ENCODE measurements at regions of chr1 and their contacts with region 1.

Region 1: DNA sequence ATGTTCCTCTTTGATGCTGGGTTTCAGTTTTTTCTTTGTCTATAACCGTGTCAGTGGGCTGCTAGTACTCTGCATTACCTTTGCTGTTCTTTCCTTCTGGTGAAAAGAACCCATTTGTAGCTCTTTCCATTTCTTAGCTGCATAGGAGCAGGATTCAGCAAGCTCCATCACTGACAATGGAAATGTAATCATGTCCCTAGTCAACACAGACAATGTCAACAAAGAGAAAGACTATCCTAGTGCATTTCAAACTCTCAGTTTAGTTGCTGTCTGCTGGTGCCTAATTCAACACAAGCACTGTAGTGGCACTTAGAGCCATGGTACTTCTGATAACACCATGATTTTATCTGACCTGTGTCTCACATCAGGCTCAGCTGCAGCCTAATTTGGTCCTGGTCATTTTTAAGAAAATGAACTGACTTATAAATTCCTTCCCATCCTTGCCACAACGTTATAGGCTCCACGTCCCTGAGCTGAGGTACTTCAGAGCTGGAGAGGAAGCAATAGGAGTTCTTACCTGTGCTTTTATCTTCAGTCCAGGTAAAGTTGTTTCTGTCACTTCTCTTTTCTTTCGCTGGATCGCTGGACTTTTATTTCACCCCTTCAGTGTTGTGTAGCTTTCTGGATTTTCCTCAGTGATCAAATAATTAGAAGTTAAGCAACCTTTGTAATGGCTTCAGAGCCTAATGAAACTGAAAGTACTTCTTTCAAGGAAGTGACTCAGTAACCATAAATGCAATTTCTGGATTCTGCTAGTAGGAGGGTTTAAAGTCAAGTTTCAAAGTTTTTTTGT is at the start of gene GBP3:
- DNase-seq: peak; percentile 70
- ATAC-seq: peak; percentile 73
- H3K4me3 ChIP-seq: peak within 1 kb of the TSS; percentile 63
- H3K27ac ChIP-seq: peak within 1 kb of the TSS; percentile 68
- H3K4me1 ChIP-seq: peaks cover 24% of the 10 kb centered on the region
- H3K27me3 ChIP-seq: no peaks in the 10 kb centered on the region
- CTCF ChIP-seq: no peak
- total RNA-seq, gene GBP3: 23.3 and 24.9 TPM in 2 replicates

Region 2: DNA sequence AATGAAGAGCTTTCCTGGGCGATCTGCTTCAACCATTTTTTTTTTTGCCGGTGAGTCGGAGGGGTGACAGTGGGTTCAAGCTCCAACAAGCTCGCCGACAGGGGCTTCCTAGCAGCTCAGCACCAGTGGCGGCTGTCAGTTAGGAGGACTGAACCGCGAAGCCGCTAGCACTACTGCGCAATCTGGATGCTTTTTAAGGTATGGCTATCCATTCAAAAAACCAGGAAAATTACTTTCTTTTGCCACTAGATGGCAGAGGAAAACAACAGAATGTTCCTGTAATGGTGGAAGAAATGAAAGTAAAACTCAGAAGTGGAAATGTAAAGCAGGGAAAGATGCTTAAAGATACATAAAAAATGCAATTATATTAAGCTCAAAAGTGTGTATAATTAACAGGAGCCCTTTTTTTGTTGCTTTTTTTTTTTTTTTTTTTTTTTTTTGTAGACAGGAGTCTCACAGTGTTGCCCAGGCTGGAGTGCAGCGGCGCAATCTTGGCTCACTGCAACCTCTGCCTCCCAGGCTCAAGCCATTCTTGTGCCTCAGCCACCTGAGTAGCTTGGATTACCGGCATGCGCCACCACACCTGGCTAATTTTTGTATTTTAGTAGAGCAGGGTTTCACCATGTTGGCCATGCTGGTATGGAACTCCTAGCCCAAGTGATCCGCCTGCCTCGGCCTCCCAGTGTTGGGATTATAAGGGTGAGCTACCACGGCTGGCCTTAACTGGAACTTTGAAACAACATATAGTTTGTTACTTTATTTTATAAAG is 38.4 kb before region 1 on chr1:
- CTCF ChIA-PET with region 1: interaction called, 19 read pairs
- POLR2A ChIA-PET with region 1: no interaction called
- intact Hi-C with region 1: no loop called
- DNase-seq: peak; percentile 84
- ATAC-seq: 0 out of 2 replicates have a peak, but pooled peaks have one; percentile 5
- H3K4me3 ChIP-seq: peak overlapping the region; percentile 25; the same call in 1 of the 2 replicates
- H3K27ac ChIP-seq: peak overlapping the region; percentile 86; the same call in 1 of the 2 replicates
- H3K4me1 ChIP-seq: peaks cover 48% of the 10 kb centered on the region
- H3K27me3 ChIP-seq: no peaks in the 10 kb centered on the region
- CTCF ChIP-seq: peak; percentile 69

Region 3: DNA sequence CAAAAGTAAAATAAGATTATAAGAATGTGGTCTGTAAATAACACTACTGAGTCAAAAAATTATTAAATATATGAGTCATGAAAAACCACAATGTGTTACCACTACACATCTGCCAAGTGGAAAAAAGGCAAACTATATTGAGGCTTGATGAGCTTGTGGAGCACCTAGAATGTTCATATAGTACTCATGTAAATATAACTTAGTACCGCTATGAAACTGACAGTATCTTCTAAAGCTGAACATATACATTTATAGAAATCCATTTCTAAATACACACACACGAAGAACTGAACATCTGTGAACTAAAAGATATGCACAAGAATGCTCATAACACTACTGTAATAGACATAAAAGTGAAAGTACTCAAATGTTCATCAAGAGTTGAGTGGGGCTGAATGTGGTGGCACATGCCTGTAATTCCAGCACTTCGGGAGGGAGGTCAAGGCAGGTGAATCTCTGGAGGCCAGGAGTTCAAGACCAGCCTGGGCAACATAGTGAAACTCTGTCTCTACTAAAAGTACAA is 18.8 kb after region 1 on chr1:
- CTCF ChIA-PET with region 1: no interaction called
- POLR2A ChIA-PET with region 1: interaction called, 12 read pairs
- intact Hi-C with region 1: loop called (anchors 1 kb)
- DNase-seq: peak; percentile 90
- ATAC-seq: peak; percentile 95
- H3K4me3 ChIP-seq: peak overlapping the region; percentile 45
- H3K27ac ChIP-seq: peak overlapping the region; percentile 81
- H3K4me1 ChIP-seq: peaks cover 20% of the 10 kb centered on the region
- H3K27me3 ChIP-seq: no peaks in the 10 kb centered on the region
- CTCF ChIP-seq: no peak

Region 4: GRCh38 chr1:89125913-89126580 is 103.7 kb after region 1 on chr1 and contains the start of gene GBP2:
- CTCF ChIA-PET with region 1: no interaction called
- POLR2A ChIA-PET with region 1: no interaction called
- intact Hi-C with region 1: loop called (anchors 1 kb)
- DNase-seq: peak; percentile 84
- ATAC-seq: peak; percentile 95
- H3K4me3 ChIP-seq: peak within 1 kb of the TSS; percentile 41; the same call in 1 of the 2 replicates
- H3K27ac ChIP-seq: 0 out of 2 replicates have a peak within 1 kb of the TSS, but pooled peaks have one; percentile 11
- H3K4me1 ChIP-seq: peaks cover 20% of the 10 kb centered on the region
- H3K27me3 ChIP-seq: no peaks in the 10 kb centered on the region
- CTCF ChIP-seq: no peak
- total RNA-seq, gene GBP2: 1.6 and 2.1 TPM in 2 replicates

Region 5: GRCh38 chr1:89179343-89179742 is 157.0 kb after region 1 on chr1:
- CTCF ChIA-PET with region 1: no interaction called
- POLR2A ChIA-PET with region 1: no interaction called
- intact Hi-C with region 1: loop called (anchors 5 kb)
- DNase-seq: peak; percentile 72
- ATAC-seq: peak; percentile 89
- H3K4me3 ChIP-seq: no peak overlapping the region
- H3K27ac ChIP-seq: peak overlapping the region; percentile 42
- H3K4me1 ChIP-seq: peaks cover 8% of the 10 kb centered on the region; the same call in 1 of the 2 replicates
- H3K27me3 ChIP-seq: no peaks in the 10 kb centered on the region
- CTCF ChIP-seq: no peak

Region 6: GRCh38 chr1:89243046-89243445 is 220.7 kb after region 1 on chr1:
- CTCF ChIA-PET with region 1: no interaction called
- POLR2A ChIA-PET with region 1: no interaction called
- intact Hi-C with region 1: no loop called
- DNase-seq: no peak
- ATAC-seq: no peak
- H3K4me3 ChIP-seq: no peak overlapping the region
- H3K27ac ChIP-seq: no peak overlapping the region
- H3K4me1 ChIP-seq: no peaks in the 10 kb centered on the region
- H3K27me3 ChIP-seq: no peaks in the 10 kb centered on the region
- CTCF ChIP-seq: no peak